GM23248 (cell line): ENCODE measurements at regions of chr14 and their contacts with region 1.

Region 1: DNA sequence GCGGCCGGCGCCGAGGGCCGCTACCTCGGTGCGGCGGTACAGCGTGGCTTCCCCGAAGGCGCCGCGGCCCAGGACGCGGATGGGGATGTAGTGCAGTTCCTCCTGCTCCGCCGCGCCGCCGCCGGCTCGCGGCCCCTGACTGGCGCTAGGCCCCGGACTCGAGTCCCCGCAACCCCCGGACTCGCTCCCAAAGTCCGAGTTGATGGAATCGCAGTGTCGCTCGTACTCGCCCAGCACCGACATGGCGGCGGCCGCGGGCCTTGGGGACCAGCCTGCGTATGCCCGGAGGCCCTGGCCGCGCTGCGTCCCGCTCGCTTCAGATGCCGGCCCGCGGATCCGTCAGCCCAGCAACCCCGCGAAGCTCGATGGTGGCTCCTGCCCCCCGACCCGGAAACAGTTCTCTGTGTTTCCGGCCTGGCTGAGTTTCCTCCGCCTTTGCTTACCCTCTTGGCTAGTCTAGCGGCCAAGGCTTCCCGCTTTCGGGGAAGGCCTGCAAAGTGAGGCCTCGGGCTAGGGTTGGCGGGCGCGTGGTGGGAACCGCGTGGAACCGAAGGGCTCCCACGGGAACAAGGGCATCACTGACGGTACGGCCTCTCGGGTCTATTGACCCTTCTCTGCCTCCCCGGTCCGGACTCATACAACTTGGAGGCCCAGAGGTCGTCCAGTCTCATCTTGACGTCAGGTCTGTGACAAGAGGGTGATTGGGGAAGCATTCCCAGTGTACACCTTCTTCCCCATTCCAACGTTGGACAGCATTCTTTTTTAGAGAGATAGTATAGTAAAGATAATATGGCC is at the start of gene NEK9:
- DNase-seq: peak; percentile 94
- H3K4me3 ChIP-seq: peak within 1 kb of the TSS; percentile 78
- H3K27ac ChIP-seq: peak within 1 kb of the TSS; percentile 78
- H3K4me1 ChIP-seq: peaks cover 27% of the 10 kb centered on the region
- H3K27me3 ChIP-seq: no peaks in the 10 kb centered on the region
- total RNA-seq, gene NEK9: 27.6 and 41.0 TPM in 2 replicates

Region 2: DNA sequence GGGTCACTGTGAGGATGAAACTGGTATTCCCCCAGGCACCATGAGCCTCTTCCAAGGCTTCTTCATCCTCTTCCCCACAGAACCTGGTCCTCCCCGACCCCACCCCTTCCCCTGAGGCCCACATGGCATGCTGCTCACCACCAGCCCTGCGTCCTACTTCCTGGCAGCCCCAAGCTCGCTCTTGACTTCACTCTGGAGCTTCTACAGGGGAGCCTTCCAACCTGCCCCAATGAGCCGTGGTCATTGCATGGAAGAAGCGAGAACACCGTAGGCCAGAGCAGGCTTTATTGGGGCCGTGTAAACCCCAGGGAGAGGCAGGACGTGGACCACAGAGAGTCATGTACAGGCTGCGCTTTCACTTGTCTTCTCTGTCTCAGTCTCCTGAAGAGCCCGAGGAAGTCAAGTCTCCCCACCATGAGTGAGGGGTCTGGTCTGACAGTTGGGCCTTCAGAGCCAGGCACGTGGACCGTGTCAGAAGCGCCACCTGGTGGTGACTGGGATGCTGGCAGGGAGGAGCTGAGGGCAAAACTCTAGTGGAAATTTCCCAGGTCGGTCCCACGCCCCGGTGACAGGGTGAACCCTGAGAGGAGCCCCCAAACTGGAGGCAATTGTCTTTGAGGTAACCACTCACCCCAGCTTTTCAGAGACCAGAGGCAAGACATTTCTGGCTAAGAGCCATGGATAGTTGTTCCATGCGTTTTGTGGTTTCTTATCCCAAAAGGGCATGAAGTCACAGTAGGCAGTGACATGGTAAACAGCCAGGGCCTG is 221.3 kb before region 1 on chr14:
- in situ Hi-C with region 1: no loop called
- DNase-seq: peak; percentile 70
- H3K4me3 ChIP-seq: no peak overlapping the region
- H3K27ac ChIP-seq: no peak overlapping the region
- H3K4me1 ChIP-seq: peaks cover 4% of the 10 kb centered on the region; the same call in 1 of the 2 replicates
- H3K27me3 ChIP-seq: no peaks in the 10 kb centered on the region

Region 3: GRCh38 chr14:75307700-75308379 is 181.0 kb after region 1 on chr14:
- in situ Hi-C with region 1: loop called (anchors 10 kb)
- DNase-seq: peak; percentile 90
- H3K4me3 ChIP-seq: no peak overlapping the region
- H3K27ac ChIP-seq: no peak overlapping the region
- H3K4me1 ChIP-seq: peaks cover 12% of the 10 kb centered on the region
- H3K27me3 ChIP-seq: no peaks in the 10 kb centered on the region

Region 4: GRCh38 chr14:75452900-75453747 is 326.2 kb after region 1 on chr14:
- in situ Hi-C with region 1: loop called (anchors 25 kb)
- DNase-seq: peak; percentile 96
- H3K4me3 ChIP-seq: peak overlapping the region; percentile 36; the same call in 1 of the 2 replicates
- H3K27ac ChIP-seq: peak overlapping the region; percentile 93
- H3K4me1 ChIP-seq: peaks cover 68% of the 10 kb centered on the region
- H3K27me3 ChIP-seq: no peaks in the 10 kb centered on the region